Activated CD4-positive, alpha-beta T cell treated with anti-CD3 and anti-CD28 coated beads, Interleukin-2, amount 10 ng/mL, durations not matched to agents 24 days and 14 days (primary cell): ENCODE measurements at regions of chr1 and their contacts with region 1.

Region 1: GRCh38 chr1:154558575-154559465 is at the start of gene UBE2Q1:
- DNase-seq: peak; percentile 100
- H3K4me3 Mint-ChIP-seq: peak within 1 kb of the TSS; percentile 98
- H3K27ac Mint-ChIP-seq: peak within 1 kb of the TSS; percentile 98
- H3K4me1 Mint-ChIP-seq: peaks cover 38% of the 10 kb centered on the region
- H3K27me3 Mint-ChIP-seq: no peaks in the 10 kb centered on the region
- total RNA-seq, gene UBE2Q1: 86.6 and 104 TPM in 2 replicates

Region 2: DNA sequence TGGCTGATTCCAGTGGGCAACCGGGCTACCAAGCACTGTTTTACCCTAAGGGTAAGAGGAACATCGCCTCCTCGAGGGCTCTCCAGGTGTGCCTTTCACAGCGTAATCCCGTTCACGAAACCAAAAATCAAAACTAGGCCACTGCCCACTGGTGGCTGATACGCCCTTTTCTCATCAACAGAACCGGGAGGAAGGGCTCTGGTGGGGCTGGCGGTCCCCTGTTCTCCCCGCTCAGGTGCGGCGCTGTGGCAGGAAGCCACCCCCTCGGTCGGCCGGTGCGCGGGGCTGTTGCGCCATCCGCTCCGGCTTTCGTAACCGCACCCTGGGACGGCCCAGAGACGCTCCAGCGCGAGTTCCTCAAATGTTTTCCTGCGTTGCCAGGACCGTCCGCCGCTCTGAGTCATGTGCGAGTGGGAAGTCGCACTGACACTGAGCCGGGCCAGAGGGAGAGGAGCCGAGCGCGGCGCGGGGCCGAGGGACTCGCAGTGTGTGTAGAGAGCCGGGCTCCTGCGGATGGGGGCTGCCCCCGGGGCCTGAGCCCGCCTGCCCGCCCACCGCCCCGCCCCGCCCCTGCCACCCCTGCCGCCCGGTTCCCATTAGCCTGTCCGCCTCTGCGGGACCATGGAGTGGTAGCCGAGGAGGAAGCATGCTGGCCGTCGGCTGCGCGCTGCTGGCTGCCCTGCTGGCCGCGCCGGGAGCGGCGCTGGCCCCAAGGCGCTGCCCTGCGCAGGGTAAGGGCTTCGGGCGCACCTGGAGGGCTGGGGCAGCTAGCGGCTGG is 153.6 kb before region 1 on chr1 and contains the start of gene IL6R:
- intact Hi-C with region 1: loop called (anchors 5 kb)
- DNase-seq: peak; percentile 90
- H3K4me3 Mint-ChIP-seq: peak within 1 kb of the TSS; percentile 86
- H3K27ac Mint-ChIP-seq: peak within 1 kb of the TSS; percentile 81
- H3K4me1 Mint-ChIP-seq: peaks cover 64% of the 10 kb centered on the region
- H3K27me3 Mint-ChIP-seq: peaks cover 2% of the 10 kb centered on the region
- total RNA-seq, gene IL6R: 3.0 and 3.3 TPM in 2 replicates

Region 3: DNA sequence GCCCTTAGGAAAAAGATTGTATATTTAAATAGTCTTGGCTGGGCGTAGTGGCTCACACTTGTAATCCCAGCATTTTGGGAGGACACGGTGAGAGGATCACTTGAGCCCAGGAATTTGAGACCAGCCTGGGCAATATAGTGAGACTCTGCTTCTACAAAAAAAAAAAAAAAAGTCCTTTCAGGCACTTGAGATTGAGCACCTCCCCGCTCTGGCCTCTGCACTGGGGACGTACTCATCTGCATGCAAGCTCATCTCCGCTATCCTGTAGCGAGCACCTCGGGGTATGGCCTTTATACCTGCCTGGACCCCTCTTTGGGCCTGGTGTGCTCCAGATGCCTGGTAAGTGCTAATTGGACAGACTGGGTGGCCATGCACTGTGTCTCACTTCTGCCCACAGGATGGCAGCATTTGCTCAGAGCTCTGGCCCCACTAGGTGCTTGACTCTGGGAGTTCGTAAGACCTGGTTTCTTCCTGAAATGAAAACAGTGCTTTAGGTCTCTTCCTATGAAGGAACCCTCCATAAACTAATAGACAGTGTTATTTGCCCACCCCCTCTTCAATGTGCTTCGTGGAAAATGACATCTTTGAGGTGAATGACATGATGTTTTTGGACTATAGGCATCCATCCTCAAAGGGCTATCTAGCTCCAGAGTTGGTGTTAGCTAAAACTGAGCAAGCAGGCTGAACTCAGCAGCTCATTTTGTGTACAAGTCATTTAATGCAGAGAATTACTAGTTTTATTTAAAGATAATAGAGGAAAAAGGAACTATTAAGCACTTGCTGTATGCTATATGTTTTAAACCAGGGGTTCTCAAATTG is 110.9 kb after region 1 on chr1:
- intact Hi-C with region 1: loop called (anchors 1 kb)
- DNase-seq: peak; percentile 93
- H3K4me3 Mint-ChIP-seq: no peak overlapping the region
- H3K27ac Mint-ChIP-seq: peak overlapping the region; percentile 53
- H3K4me1 Mint-ChIP-seq: peaks cover 12% of the 10 kb centered on the region
- H3K27me3 Mint-ChIP-seq: peaks cover 3% of the 10 kb centered on the region

Region 4: DNA sequence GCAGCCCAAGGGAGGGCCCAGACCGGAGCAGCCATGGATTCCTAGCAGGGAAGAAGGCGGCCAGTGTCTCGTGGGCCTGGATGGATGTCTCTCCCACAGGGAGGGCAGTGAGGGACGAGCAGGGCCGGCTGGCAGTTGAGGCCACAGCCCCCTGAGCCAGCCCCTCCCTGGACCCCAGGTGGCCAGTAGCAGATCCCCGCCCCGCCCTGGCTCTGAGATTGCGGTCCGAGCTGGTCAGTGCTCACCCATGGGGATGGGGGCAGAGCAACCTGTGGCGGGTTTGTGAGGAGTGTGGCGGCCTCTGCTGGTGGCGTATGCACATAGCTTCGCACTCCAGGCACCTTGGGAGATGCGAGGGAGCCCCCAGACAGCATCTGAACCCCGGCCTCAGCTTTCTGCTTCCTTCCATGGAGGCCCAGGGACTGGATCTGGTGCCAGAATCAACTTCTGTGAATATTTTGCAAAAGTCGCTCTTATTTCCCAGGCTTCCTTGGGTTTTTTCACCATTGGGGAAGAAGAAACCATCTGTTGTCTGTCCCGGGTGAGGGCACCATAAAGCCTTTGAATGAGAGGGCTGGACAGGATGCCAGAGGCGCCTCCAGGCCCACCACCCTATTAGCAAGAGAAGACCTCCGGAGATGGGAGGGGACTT is 319.7 kb after region 1 on chr1:
- intact Hi-C with region 1: loop called (anchors 1 kb)
- DNase-seq: peak; percentile 92
- H3K4me3 Mint-ChIP-seq: no peak overlapping the region
- H3K27ac Mint-ChIP-seq: no peak overlapping the region
- H3K4me1 Mint-ChIP-seq: peaks cover 8% of the 10 kb centered on the region
- H3K27me3 Mint-ChIP-seq: peaks cover 2% of the 10 kb centered on the region

Region 5: GRCh38 chr1:154955718-154956543 is 397.1 kb after region 1 on chr1 and contains the start of gene PBXIP1:
- intact Hi-C with region 1: loop called (anchors 1 kb)
- DNase-seq: peak; percentile 97
- H3K4me3 Mint-ChIP-seq: peak within 1 kb of the TSS; percentile 87
- H3K27ac Mint-ChIP-seq: peak within 1 kb of the TSS; percentile 96
- H3K4me1 Mint-ChIP-seq: peaks cover 63% of the 10 kb centered on the region
- H3K27me3 Mint-ChIP-seq: no peaks in the 10 kb centered on the region
- total RNA-seq, gene PBXIP1: 19.3 and 21.6 TPM in 2 replicates

Region 6: GRCh38 chr1:155084722-155085503 is 526.1 kb after region 1 on chr1:
- intact Hi-C with region 1: loop called (anchors 1 kb)
- DNase-seq: peak; percentile 98
- H3K4me3 Mint-ChIP-seq: peak overlapping the region; percentile 92
- H3K27ac Mint-ChIP-seq: peak overlapping the region; percentile 93
- H3K4me1 Mint-ChIP-seq: peaks cover 36% of the 10 kb centered on the region
- H3K27me3 Mint-ChIP-seq: peaks cover 28% of the 10 kb centered on the region